Right lobe of liver (tissue), 6 donors: ENCODE measurements at regions of chr10 and their contacts with region 1.

Region 1: DNA sequence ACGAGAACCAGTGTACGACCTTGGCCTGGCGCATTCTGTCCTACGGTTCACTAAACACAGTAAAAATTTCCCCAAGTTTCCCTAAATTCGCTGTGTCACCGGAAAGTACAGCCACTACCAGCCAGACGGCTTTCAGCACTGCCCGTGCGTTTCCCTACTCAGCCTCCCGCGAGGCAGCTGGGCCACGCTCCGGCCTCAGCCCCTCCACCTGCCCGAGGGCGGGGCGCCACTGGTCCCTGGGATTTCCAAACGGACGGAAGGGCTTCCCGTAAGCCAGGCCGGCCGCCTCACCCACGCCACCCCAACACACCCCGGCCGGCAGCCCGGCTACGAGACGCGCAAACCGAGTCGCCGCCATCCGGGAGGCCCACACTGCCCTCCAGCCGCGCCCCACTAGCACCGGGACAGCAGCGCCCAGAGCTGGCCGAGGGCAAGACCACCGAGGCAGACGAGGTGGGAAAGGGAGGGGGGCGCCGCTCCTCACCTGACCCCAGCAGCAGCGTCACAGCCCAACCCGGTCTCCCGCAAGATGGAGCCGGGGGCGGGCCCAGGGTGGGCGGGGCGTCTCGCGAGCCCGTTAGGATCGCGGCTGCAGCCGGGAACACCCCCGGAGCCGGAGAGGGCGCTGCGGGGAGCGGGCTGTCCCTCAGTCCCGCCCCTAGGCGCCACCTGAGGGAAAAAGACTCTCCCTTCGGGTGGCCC is at the start of gene ANXA7:
- DNase-seq: peak; percentile 97
- ATAC-seq: peak; percentile 96 to 99 (median 98)
- H3K4me3 ChIP-seq: peak within 1 kb of the TSS; percentile 70 to 92 (median 90)
- H3K27ac ChIP-seq: peak within 1 kb of the TSS; percentile 89 to 98 (median 98)
- H3K4me1 ChIP-seq: peaks cover 0 to 25% (median 0%) of the 10 kb centered on the region in 4 donors
- H3K27me3 ChIP-seq: no peaks in the 10 kb centered on the region
- CTCF ChIP-seq: peak; percentile 26 to 49 (median 38)
- POLR2A ChIP-seq: peak; percentile 81
- total RNA-seq, gene ANXA7: 79.6 to 139 (median 102) TPM

Region 2: GRCh38 chr10:73344269-73344668 is 69.4 kb before region 1 on chr10:
- intact Hi-C with region 1: no loop called
- DNase-seq: no peak
- ATAC-seq: no peak
- H3K4me3 ChIP-seq: no peak overlapping the region
- H3K27ac ChIP-seq: no peak overlapping the region
- H3K4me1 ChIP-seq: no peaks in the 10 kb centered on the region
- H3K27me3 ChIP-seq: no peaks in the 10 kb centered on the region
- CTCF ChIP-seq: no peak
- POLR2A ChIP-seq: no peak

Region 3: GRCh38 chr10:73495884-73496674 is 82.4 kb after region 1 on chr10 and contains the start of gene PPP3CB:
- intact Hi-C with region 1: loop called in 1 of 2 experiments (anchors 10 kb)
- DNase-seq: peak; percentile 91 to 92 (median 92)
- ATAC-seq: peak; percentile 82 to 88 (median 84)
- H3K4me3 ChIP-seq: peak within 1 kb of the TSS; percentile 73 to 91 (median 85)
- H3K27ac ChIP-seq: peak within 1 kb of the TSS; percentile 77 to 90 (median 83)
- H3K4me1 ChIP-seq: peaks cover 0 to 18% (median 9%) of the 10 kb centered on the region in 4 donors
- H3K27me3 ChIP-seq: no peaks in the 10 kb centered on the region
- CTCF ChIP-seq: no peak
- POLR2A ChIP-seq: no peak
- total RNA-seq, gene PPP3CB: 10.9 to 13.6 (median 13.5) TPM